ENCODE measurements at regions of chr9 and their contacts with region 1.

Region 1: DNA sequence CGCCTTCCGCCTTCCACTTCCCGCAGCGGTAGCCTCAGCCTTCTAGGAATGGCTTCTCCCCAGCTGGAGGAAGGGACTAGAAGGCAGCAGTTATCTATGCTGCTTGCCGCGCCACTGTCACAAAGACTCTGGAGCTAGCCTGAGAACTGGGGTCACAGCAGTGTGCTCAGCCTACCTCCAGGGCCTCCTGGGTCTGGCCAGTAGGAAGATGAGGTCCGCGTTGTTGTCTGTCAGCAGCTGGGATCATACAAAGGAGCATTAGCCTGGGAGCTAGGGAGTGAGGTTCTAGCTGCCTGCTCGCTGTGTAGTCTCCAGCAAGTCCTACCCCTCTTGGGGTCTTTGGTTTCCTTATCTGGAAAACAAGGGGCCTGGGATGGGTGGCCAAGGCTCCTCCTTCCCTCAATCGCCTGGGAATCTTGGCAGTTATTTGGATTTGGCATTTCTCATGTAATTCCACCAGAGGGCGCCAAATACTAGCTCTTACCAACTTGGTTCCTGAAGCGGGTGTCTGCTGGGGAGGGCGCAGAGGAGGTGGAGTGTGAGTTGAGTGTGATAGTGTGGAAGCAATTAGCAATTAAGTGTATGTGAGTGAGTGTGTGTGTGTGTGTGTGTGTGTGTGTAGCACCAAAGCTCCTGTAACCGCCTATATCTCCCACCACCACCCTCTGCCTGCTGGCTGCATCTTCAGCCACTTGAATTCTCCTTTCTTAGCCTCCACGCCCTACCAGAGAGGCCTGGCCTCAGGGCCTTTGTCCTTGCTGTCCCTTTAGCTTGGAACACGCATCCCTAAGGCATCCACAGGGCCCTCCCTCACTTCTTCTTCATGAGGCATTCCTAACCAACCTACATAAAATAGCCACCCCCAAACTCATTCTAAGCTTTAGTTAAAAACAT is 97.1 kb downstream of the ENTREP1 start:
- DNase-seq: peak; percentile 68
- H3K4me3 ChIP-seq: no peak overlapping the region
- H3K27ac ChIP-seq: no peak overlapping the region
- H3K4me1 ChIP-seq: no peaks in the 10 kb centered on the region
- H3K27me3 ChIP-seq: no peaks in the 10 kb centered on the region
- CTCF ChIP-seq: peak; percentile 75

Region 2: DNA sequence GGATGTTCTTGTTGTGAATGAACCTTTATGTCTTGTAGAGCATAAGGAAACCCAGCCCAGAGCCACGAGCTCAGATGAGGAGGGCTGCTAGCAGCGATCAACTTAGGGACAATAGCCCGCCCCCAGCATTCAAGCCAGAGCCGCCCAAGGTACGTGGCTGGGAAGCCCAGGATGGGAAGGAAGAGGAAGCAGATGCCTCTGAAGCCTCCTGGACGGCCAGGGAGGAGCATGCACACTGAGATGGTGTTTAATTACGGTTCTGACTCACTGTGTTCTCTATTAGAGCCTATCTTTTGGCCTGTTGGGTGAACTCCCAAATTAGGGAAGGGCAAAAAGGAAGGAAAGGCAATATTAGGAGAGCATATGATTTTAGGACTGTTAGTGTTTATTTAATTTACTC is 172.8 kb before region 1 on chr9:
- CTCF ChIA-PET with region 1: interaction called, 14 read pairs
- POLR2A ChIA-PET with region 1: no interaction called
- intact Hi-C with region 1: no loop called
- DNase-seq: peak; percentile 2
- H3K4me3 ChIP-seq: no peak overlapping the region
- H3K27ac ChIP-seq: no peak overlapping the region
- H3K4me1 ChIP-seq: no peaks in the 10 kb centered on the region
- H3K27me3 ChIP-seq: no peaks in the 10 kb centered on the region
- CTCF ChIP-seq: no peak

Region 3: GRCh38 chr9:69397384-69398214 is 24.6 kb before region 1 on chr9:
- CTCF ChIA-PET with region 1: no interaction called
- POLR2A ChIA-PET with region 1: no interaction called
- intact Hi-C with region 1: no loop called
- DNase-seq: no peak
- H3K4me3 ChIP-seq: no peak overlapping the region
- H3K27ac ChIP-seq: no peak overlapping the region
- H3K4me1 ChIP-seq: no peaks in the 10 kb centered on the region
- H3K27me3 ChIP-seq: no peaks in the 10 kb centered on the region
- CTCF ChIP-seq: no peak

Region 4: DNA sequence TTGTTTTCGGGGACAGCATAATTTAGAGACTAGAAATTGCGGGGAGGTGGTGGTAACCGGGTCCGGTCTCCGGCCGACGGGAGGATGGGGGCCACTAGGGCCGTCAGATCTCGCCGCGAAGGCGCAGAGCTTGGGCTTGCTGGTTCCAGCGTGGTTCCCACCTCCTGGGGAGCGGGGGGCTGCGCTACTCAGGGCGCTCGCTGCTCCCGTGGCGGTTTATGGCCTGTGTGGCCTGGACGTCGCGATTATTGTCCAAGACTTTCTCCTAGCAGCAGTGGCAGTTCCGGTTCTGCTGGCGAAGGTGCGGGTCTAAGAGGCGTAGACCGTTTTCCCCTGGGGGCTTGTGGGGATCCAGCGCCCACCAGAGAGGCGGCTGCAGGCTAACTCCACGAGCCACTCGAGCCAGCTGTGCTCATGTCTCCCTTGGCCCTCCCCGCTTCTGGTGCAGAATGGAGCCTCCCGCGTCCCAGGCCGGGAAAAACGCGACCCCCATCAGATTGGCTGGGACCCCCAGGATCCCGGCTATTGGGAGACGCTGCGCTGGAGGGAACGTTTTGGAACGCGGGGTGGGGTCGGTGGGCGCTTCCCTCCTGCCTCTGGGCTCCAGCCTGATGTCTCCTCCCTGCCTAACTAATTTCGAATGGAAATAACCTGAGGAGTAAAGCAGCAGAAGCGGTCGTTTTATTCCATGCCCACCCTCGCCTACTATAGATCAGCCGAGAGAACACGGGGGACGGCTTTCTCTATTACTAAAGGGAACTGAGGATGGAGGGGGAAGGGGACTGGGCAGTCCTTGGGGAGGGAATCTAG is 10.0 kb before region 1 on chr9:
- CTCF ChIA-PET with region 1: no interaction called
- POLR2A ChIA-PET with region 1: no interaction called
- intact Hi-C with region 1: no loop called
- DNase-seq: no peak
- H3K4me3 ChIP-seq: no peak overlapping the region
- H3K27ac ChIP-seq: no peak overlapping the region
- H3K4me1 ChIP-seq: no peaks in the 10 kb centered on the region
- H3K27me3 ChIP-seq: no peaks in the 10 kb centered on the region
- CTCF ChIP-seq: no peak

Region 5: GRCh38 chr9:69549310-69550202 is 127.4 kb after region 1 on chr9:
- CTCF ChIA-PET with region 1: interaction called, 3 read pairs
- POLR2A ChIA-PET with region 1: no interaction called
- intact Hi-C with region 1: loop called (anchors 2 kb)
- DNase-seq: peak; percentile 58
- H3K4me3 ChIP-seq: no peak overlapping the region
- H3K27ac ChIP-seq: no peak overlapping the region
- H3K4me1 ChIP-seq: no peaks in the 10 kb centered on the region
- H3K27me3 ChIP-seq: peaks cover 42% of the 10 kb centered on the region
- CTCF ChIP-seq: peak; percentile 82

Region 6: GRCh38 chr9:69877854-69878514 is 455.8 kb after region 1 on chr9:
- CTCF ChIA-PET with region 1: no interaction called
- POLR2A ChIA-PET with region 1: no interaction called
- intact Hi-C with region 1: loop called (anchors 1 kb)
- DNase-seq: peak; percentile 66
- H3K4me3 ChIP-seq: no peak overlapping the region
- H3K27ac ChIP-seq: no peak overlapping the region
- H3K4me1 ChIP-seq: peaks cover 3% of the 10 kb centered on the region
- H3K27me3 ChIP-seq: no peaks in the 10 kb centered on the region
- CTCF ChIP-seq: peak; percentile 75

Region 7: DNA sequence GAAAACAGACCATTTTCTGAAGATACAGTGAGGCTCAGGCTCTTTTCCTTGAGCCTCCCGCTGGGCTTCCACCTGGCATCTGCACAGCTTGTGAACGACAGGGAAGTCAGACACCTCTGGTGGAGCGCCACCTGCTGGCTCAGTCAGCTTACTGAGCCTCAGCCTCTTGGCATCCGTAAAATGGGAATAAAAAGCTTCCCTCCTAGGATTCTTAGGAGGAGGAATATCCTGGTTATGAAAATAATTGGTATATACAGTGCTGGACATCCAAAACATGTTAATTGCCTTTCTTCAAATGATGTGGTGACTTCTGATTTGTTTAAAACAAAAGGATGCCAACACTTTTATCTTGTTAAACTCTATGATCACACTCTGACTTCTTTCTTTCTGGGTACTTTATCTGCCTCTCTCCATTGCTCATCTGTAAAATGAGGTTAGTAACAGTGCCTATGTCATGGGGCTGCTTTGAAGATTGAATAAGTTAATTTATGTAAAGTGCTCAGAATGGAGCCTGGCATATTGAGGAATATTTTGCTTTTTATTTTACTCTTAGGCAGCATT is 689.0 kb after region 1 on chr9:
- CTCF ChIA-PET with region 1: no interaction called
- POLR2A ChIA-PET with region 1: no interaction called
- intact Hi-C with region 1: loop called (anchors 10 kb)
- DNase-seq: peak; percentile 58
- H3K4me3 ChIP-seq: no peak overlapping the region
- H3K27ac ChIP-seq: no peak overlapping the region
- H3K4me1 ChIP-seq: no peaks in the 10 kb centered on the region
- H3K27me3 ChIP-seq: peaks cover 7% of the 10 kb centered on the region
- CTCF ChIP-seq: peak; percentile 94